ENCODE measurements at regions of chr7 and their contacts with region 1.

Region 1: GRCh38 chr7:107201795-107202450 is 33.1 kb downstream of the HBP1 start:
- DNase-seq: peak; percentile 61
- ATAC-seq: peak; percentile 78
- H3K4me3 Mint-ChIP-seq: no peak overlapping the region
- H3K27ac Mint-ChIP-seq: no peak overlapping the region
- H3K4me1 Mint-ChIP-seq: no peaks in the 10 kb centered on the region
- H3K27me3 Mint-ChIP-seq: no peaks in the 10 kb centered on the region

Region 2: GRCh38 chr7:107220356-107220755 is 18.4 kb after region 1 on chr7:
- CTCF ChIA-PET with region 1: no interaction called
- POLR2A ChIA-PET with region 1: no interaction called
- intact Hi-C with region 1: no loop called
- DNase-seq: no peak
- ATAC-seq: no peak
- H3K4me3 Mint-ChIP-seq: no peak overlapping the region
- H3K27ac Mint-ChIP-seq: no peak overlapping the region
- H3K4me1 Mint-ChIP-seq: peaks cover 2% of the 10 kb centered on the region
- H3K27me3 Mint-ChIP-seq: no peaks in the 10 kb centered on the region

Region 3: GRCh38 chr7:107501593-107501992 is 299.7 kb after region 1 on chr7:
- CTCF ChIA-PET with region 1: interaction called, 3 read pairs
- POLR2A ChIA-PET with region 1: no interaction called
- intact Hi-C with region 1: loop called in 1 of 2 experiments (anchors 2 kb)
- DNase-seq: peak; percentile 49
- ATAC-seq: no peak
- H3K4me3 Mint-ChIP-seq: no peak overlapping the region
- H3K27ac Mint-ChIP-seq: no peak overlapping the region
- H3K4me1 Mint-ChIP-seq: peaks cover 11% of the 10 kb centered on the region
- H3K27me3 Mint-ChIP-seq: no peaks in the 10 kb centered on the region

Measured in activated CD4-positive, alpha-beta T cell treated with anti-CD3 and anti-CD28 coated beads for 36 hours (primary cell).